ENCODE measurements at regions of chr11 and their contacts with region 1.

Region 1: DNA sequence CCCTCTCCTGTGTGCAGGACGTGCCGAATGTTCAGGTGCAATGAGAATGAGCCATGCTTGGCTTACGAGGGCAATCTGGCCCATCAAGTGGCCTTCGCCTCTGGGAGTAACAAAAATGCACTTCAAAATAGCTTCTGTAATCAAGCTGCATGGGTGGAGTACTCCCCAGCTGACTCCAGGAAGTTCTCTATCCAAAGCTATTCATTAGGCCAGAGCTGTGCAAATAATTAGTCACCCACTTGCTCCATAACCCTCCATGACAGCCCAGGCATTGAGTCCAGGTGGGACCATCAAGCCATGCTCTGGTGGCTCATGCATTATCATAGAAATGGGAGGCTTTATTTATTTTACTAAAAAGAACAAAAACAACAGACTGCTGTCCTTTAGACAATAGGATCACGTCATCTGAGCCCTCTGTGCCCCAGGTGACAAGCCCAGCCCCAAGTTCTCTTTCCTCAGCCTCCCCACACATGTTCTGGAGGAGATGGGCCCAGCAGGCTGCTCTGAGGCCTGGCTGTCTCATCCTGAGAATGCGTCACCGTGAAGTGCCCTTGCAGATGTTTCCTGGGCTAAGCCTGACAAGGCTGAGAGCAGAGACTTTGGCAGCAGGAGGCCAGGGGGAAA is 244.7 kb downstream of the ETS1 start:
- DNase-seq: peak; percentile 55
- H3K4me3 Mint-ChIP-seq: peak overlapping the region; percentile 7
- H3K27ac Mint-ChIP-seq: peak overlapping the region; percentile 81
- H3K4me1 Mint-ChIP-seq: peaks cover 73% of the 10 kb centered on the region
- H3K27me3 Mint-ChIP-seq: no peaks in the 10 kb centered on the region

Region 2: GRCh38 chr11:128172046-128172878 is 170.4 kb before region 1 on chr11:
- intact Hi-C with region 1: loop called (anchors 5 kb)
- DNase-seq: peak; percentile 72
- H3K4me3 Mint-ChIP-seq: no peak overlapping the region
- H3K27ac Mint-ChIP-seq: peak overlapping the region; percentile 54
- H3K4me1 Mint-ChIP-seq: peaks cover 35% of the 10 kb centered on the region
- H3K27me3 Mint-ChIP-seq: peaks cover 6% of the 10 kb centered on the region

Region 3: DNA sequence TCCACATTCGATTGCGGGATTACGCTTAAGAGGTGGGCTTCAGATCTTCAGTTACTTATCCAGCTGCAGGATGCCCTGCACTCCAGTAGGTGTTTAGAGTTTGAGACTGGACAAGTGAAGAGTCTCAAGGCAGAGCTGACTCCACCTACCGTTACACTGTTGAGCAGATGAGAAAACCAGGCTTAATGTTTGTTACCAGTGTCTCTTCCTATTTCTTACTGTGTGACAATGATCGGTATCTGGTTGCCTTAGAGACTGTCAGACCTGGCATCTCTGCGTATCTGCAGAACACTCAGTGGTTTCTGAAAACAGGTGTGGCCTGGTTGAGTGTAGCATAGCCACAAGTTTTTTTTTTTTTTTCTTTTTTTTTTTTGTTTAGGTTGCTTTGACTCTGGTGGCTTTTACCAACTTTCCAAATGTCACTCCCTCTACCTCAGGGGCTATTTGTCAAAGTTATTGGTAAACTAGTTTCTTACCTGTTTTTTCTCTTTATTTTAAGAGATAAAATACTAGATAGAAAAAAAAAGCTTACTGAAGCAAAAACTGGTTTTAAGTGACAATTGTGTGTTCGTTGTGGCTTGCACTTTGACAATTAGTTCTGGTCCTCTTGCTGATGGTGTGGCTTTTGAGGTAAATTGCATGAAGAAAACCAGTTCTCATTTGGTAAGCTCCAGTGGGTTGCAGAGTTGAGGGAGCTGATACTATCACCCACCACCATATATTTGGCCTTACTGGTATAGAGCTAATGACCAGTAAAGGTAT is 40.0 kb before region 1 on chr11:
- intact Hi-C with region 1: loop called (anchors 1 kb)
- DNase-seq: peak; percentile 82
- H3K4me3 Mint-ChIP-seq: peak overlapping the region; percentile 90
- H3K27ac Mint-ChIP-seq: peak overlapping the region; percentile 96
- H3K4me1 Mint-ChIP-seq: peaks cover 71% of the 10 kb centered on the region
- H3K27me3 Mint-ChIP-seq: no peaks in the 10 kb centered on the region

Region 4: GRCh38 chr11:128328955-128329551 is 13.6 kb before region 1 on chr11:
- intact Hi-C with region 1: loop called (anchors 1 kb)
- DNase-seq: no peak
- H3K4me3 Mint-ChIP-seq: peak overlapping the region; percentile 19
- H3K27ac Mint-ChIP-seq: peak overlapping the region; percentile 94
- H3K4me1 Mint-ChIP-seq: peaks cover 72% of the 10 kb centered on the region
- H3K27me3 Mint-ChIP-seq: no peaks in the 10 kb centered on the region

Region 5: GRCh38 chr11:128422576-128423370 is 80.2 kb after region 1 on chr11:
- intact Hi-C with region 1: loop called (anchors 1 kb)
- DNase-seq: peak; percentile 66
- H3K4me3 Mint-ChIP-seq: peak overlapping the region; percentile 33
- H3K27ac Mint-ChIP-seq: peak overlapping the region; percentile 96
- H3K4me1 Mint-ChIP-seq: peaks cover 43% of the 10 kb centered on the region
- H3K27me3 Mint-ChIP-seq: no peaks in the 10 kb centered on the region

Region 6: DNA sequence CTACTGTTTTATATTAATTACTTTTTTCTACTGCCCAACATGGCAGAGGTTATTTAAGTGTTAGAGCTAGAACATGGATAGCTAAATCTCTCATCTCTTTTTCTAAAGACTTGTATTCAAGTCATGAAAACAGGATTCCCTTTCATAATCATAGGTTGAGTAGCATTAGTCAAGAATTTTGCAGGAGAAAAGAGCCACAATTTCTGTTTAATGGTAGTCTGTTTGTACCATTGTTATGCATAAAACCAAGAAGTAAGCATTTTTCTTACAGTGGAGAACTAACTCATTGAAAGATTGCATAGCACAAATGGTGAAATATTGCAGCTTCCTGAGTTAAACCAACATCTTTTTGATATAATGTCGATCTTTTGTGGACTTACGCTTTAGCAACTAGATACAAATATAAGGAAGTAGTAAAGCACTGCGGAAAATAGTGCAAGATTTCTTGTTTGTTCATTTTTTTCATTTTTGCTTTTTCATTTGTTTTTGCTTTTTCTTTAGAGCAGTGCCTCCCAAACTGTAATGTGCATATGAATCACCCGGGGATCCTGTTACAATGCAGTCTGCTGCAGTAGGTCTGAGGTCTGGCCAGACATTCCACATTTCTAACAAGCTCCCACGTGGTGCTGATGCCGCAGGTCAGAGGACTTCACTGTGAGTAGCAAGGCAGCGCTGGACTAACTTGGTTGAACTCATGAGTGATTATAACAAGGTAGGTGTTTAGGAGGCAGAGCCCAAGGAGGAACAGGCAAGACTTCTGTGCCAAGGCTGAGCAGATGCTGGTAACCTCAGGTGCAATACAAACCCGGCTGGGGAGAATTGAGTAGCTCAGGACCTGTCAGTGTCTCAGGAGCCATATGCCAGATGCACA is 240.1 kb after region 1 on chr11:
- intact Hi-C with region 1: loop called (anchors 5 kb)
- DNase-seq: no peak
- H3K4me3 Mint-ChIP-seq: no peak overlapping the region
- H3K27ac Mint-ChIP-seq: no peak overlapping the region
- H3K4me1 Mint-ChIP-seq: peaks cover 26% of the 10 kb centered on the region
- H3K27me3 Mint-ChIP-seq: peaks cover 15% of the 10 kb centered on the region

Region 7: GRCh38 chr11:128965485-128965884 is 622.9 kb after region 1 on chr11:
- intact Hi-C with region 1: loop called (anchors 10 kb)
- DNase-seq: no peak
- H3K4me3 Mint-ChIP-seq: peak overlapping the region; percentile 9
- H3K27ac Mint-ChIP-seq: no peak overlapping the region
- H3K4me1 Mint-ChIP-seq: peaks cover 55% of the 10 kb centered on the region
- H3K27me3 Mint-ChIP-seq: peaks cover 1% of the 10 kb centered on the region

Measured in activated T-helper 2 cell treated with anti-CD3 and anti-CD28 coated beads, Interferon-gamma antibody, Interleukin-2, Interleukin-4, amounts not matched to agents 10 μg/mL and 5 μg/mL and 100 μg/mL, durations not matched to agents 14 hours and 24 hours and 36 hours (primary cell).